Activated CD8-positive, alpha-beta T cell treated with anti-CD3 and anti-CD28 coated beads, Interleukin-2, amount 10 ng/mL, durations not matched to agents 7 days and 5 days (primary cell): ENCODE measurements at regions of chr19 and their contacts with region 1.

Region 1: GRCh38 chr19:20423381-20424197 is 142.0 kb downstream of the ZNF737 start:
- DNase-seq: peak; percentile 54
- ATAC-seq: no peak
- H3K4me3 Mint-ChIP-seq: peak overlapping the region; percentile 96
- H3K27ac Mint-ChIP-seq: peak overlapping the region; percentile 98
- H3K4me1 Mint-ChIP-seq: peaks cover 15% of the 10 kb centered on the region
- H3K27me3 Mint-ChIP-seq: no peaks in the 10 kb centered on the region

Region 2: GRCh38 chr19:20237761-20238623 is 185.6 kb before region 1 on chr19:
- CTCF ChIA-PET with region 1: no interaction called
- POLR2A ChIA-PET with region 1: interaction called, 13 read pairs
- DNase-seq: peak; percentile 94
- ATAC-seq: peak; percentile 96
- H3K4me3 Mint-ChIP-seq: peak overlapping the region; percentile 100
- H3K27ac Mint-ChIP-seq: peak overlapping the region; percentile 99
- H3K4me1 Mint-ChIP-seq: peaks cover 20% of the 10 kb centered on the region
- H3K27me3 Mint-ChIP-seq: no peaks in the 10 kb centered on the region

Region 3: GRCh38 chr19:20397292-20397691 is 26.3 kb before region 1 on chr19:
- CTCF ChIA-PET with region 1: no interaction called
- POLR2A ChIA-PET with region 1: no interaction called
- DNase-seq: no peak
- ATAC-seq: no peak
- H3K4me3 Mint-ChIP-seq: no peak overlapping the region
- H3K27ac Mint-ChIP-seq: no peak overlapping the region
- H3K4me1 Mint-ChIP-seq: no peaks in the 10 kb centered on the region
- H3K27me3 Mint-ChIP-seq: no peaks in the 10 kb centered on the region

Region 4: GRCh38 chr19:20453425-20453935 is 29.9 kb after region 1 on chr19:
- CTCF ChIA-PET with region 1: no interaction called
- POLR2A ChIA-PET with region 1: no interaction called
- DNase-seq: peak; percentile 19
- ATAC-seq: no peak
- H3K4me3 Mint-ChIP-seq: no peak overlapping the region
- H3K27ac Mint-ChIP-seq: peak overlapping the region; percentile 69
- H3K4me1 Mint-ChIP-seq: peaks cover 10% of the 10 kb centered on the region
- H3K27me3 Mint-ChIP-seq: no peaks in the 10 kb centered on the region

Region 5: DNA sequence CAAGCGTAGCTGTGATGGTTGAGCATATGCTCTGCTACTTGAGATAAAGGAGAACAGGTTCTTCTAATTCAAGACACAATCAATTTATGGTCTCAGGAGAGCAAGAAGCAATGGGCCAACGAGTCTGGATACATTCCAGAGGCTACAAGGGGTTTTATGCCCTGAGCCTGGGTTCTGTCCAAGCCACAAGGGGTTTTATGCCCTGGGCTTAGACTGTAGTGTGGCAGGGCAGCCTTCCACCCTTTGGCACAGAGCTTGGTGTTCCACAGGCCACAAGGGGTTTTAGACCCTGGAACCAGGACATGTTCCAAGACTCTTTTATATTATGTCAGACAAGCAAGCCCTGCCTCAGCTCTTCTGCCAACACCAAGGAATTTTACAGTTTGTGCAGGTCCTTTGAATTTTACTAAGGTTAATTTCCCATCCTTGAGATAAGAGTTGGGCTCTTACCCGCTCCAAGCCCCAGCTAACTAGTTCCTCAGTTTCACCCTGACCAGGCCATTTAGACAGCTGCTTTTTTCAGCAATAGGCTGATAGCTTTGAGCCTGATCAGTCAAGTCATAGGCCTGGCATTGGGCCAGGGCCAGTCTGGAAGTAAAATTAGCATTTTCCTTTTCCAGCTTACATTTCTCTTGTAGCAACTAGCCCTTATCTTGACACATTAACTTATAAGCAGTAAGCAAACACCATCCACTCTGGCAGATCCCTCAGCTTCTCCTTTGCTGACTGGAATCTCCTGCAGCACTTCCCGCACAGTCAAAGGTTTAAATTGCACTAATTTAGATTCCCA is 47.0 kb after region 1 on chr19:
- CTCF ChIA-PET with region 1: no interaction called
- POLR2A ChIA-PET with region 1: no interaction called
- DNase-seq: no peak
- ATAC-seq: no peak
- H3K4me3 Mint-ChIP-seq: no peak overlapping the region
- H3K27ac Mint-ChIP-seq: no peak overlapping the region
- H3K4me1 Mint-ChIP-seq: no peaks in the 10 kb centered on the region
- H3K27me3 Mint-ChIP-seq: no peaks in the 10 kb centered on the region

Region 6: GRCh38 chr19:20503476-20503875 is 79.9 kb after region 1 on chr19:
- CTCF ChIA-PET with region 1: no interaction called
- POLR2A ChIA-PET with region 1: no interaction called
- DNase-seq: no peak
- ATAC-seq: no peak
- H3K4me3 Mint-ChIP-seq: no peak overlapping the region
- H3K27ac Mint-ChIP-seq: no peak overlapping the region
- H3K4me1 Mint-ChIP-seq: no peaks in the 10 kb centered on the region
- H3K27me3 Mint-ChIP-seq: no peaks in the 10 kb centered on the region